ENCODE measurements at regions of chr5 and their contacts with region 1.

Region 1: DNA sequence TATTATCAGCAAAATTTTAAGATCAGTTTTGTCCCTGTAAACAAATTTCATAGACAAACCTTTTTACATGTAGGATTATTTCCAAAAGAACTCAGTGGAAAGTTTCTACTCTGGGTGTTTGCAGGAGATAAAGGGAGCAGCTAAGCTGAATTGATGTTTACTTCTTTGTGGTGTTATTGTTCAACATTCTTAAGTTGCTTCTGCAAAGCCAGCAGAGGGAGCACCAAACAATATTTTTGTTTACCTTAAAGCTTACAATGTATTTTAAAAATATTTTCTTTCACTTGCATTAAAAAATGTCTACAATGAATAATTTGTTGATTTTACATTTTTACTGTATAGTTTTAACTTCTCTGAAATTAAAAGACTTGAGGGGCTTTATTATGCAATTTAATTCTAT is 135.4 kb downstream of the ATG10 start:
- DNase-seq: no peak
- ATAC-seq: no peak
- H3K4me3 ChIP-seq: no peak overlapping the region
- H3K4me3 Mint-ChIP-seq: no peak overlapping the region
- H3K27ac ChIP-seq: no peak overlapping the region
- H3K27ac Mint-ChIP-seq: no peak overlapping the region
- H3K4me1 ChIP-seq: peaks cover 0 to 3% of the 10 kb centered on the region in 2 donors
- H3K4me1 Mint-ChIP-seq: peaks cover 2 to 38% (median 18%) of the 10 kb centered on the region in 7 donors
- H3K27me3 ChIP-seq: no peaks in the 10 kb centered on the region
- H3K27me3 Mint-ChIP-seq: no peaks in the 10 kb centered on the region

Region 2: GRCh38 chr5:81194633-81195333 is 912.5 kb before region 1 on chr5:
- CTCF ChIA-PET with region 1: no interaction called
- POLR2A ChIA-PET with region 1: no interaction called
- intact Hi-C with region 1: no loop called
- DNase-seq: peak; percentile 58 to 83 (median 74)
- ATAC-seq: peak; percentile 98
- H3K4me3 ChIP-seq: no peak overlapping the region
- H3K4me3 Mint-ChIP-seq: peak overlapping the region in 8 of 10 donors; percentile 21 to 65 (median 47)
- H3K27ac ChIP-seq: no peak overlapping the region
- H3K27ac Mint-ChIP-seq: peak overlapping the region in 7 of 9 donors; percentile 21 to 82 (median 68)
- H3K4me1 ChIP-seq: peaks cover 0 to 6% of the 10 kb centered on the region in 2 donors
- H3K4me1 Mint-ChIP-seq: peaks cover 3 to 16% (median 9%) of the 10 kb centered on the region in 7 donors
- H3K27me3 ChIP-seq: no peaks in the 10 kb centered on the region
- H3K27me3 Mint-ChIP-seq: no peaks in the 10 kb centered on the region

Region 3: GRCh38 chr5:82147865-82148573 is 40.8 kb after region 1 on chr5:
- CTCF ChIA-PET with region 1: no interaction called
- POLR2A ChIA-PET with region 1: no interaction called
- intact Hi-C with region 1: loop called in 1 of 2 experiments (anchors 5 kb)
- DNase-seq: no peak
- ATAC-seq: no peak
- H3K4me3 ChIP-seq: no peak overlapping the region
- H3K4me3 Mint-ChIP-seq: no peak overlapping the region
- H3K27ac ChIP-seq: no peak overlapping the region
- H3K27ac Mint-ChIP-seq: no peak overlapping the region
- H3K4me1 ChIP-seq: no peaks in the 10 kb centered on the region
- H3K4me1 Mint-ChIP-seq: peaks cover 0 to 4% (median 0%) of the 10 kb centered on the region in 7 donors
- H3K27me3 ChIP-seq: no peaks in the 10 kb centered on the region
- H3K27me3 Mint-ChIP-seq: no peaks in the 10 kb centered on the region

Measured in naive thymus-derived CD4-positive, alpha-beta T cell (primary cell).